ENCODE measurements at regions of chr15 and their contacts with region 1.

Region 1: DNA sequence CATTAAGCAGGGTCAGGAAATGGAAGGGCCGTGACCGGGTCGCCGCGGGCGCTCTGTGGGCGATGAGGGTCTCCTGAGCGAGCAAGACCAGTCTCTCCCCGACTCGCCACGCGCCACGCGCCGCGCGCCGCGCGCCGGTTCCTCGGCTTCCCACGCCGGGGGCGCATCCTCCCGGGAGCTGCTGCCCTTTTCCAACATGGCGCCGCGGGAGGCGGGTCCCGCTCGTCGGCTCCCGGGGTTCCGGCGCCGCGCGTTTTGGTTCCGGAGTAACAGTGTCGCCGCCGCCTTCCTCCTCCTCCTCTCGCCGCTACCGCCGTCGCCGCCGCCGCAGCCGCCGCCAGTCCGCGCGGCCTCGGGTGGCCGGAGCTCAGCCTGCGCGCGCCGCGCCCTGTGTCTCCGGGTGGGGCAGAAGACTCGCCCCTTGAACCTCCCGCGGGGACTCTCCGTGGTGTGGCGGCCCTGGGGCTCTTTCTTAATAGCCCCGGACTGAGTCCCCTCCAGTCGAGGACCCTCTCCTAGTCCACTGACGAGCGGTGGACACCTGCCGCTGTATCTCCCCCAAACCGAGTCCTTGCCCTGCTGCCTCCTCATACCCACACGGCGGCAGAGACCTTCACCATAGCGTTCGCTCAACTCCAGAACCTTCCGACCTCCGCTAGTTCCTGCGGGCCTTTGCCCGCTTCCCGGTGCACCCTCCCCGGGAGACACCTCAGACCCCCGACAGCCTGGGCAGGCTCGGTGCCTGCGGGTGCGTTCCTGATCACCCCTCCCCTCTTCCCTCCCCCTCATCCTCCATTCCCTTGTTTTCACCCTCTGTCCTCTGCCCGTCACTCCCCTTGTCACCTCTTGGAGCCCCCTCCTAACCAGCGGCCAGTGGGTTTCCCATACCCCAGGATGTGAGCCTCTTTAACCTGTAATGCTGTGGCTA is at the start of gene MAP2K5:
- H3K4me3 Mint-ChIP-seq: peak within 1 kb of the TSS; percentile 93
- H3K27ac Mint-ChIP-seq: peak within 1 kb of the TSS; percentile 93
- H3K4me1 Mint-ChIP-seq: peaks cover 25% of the 10 kb centered on the region
- H3K27me3 Mint-ChIP-seq: peaks cover 2% of the 10 kb centered on the region

Region 2: GRCh38 chr15:67456677-67457529 is 85.8 kb before region 1 on chr15:
- intact Hi-C with region 1: loop called (anchors 5 kb)
- H3K4me3 Mint-ChIP-seq: no peak overlapping the region
- H3K27ac Mint-ChIP-seq: no peak overlapping the region
- H3K4me1 Mint-ChIP-seq: no peaks in the 10 kb centered on the region
- H3K27me3 Mint-ChIP-seq: peaks cover 3% of the 10 kb centered on the region

Region 3: GRCh38 chr15:67481680-67482079 is 61.0 kb before region 1 on chr15:
- intact Hi-C with region 1: no loop called
- H3K4me3 Mint-ChIP-seq: no peak overlapping the region
- H3K27ac Mint-ChIP-seq: no peak overlapping the region
- H3K4me1 Mint-ChIP-seq: peaks cover 7% of the 10 kb centered on the region
- H3K27me3 Mint-ChIP-seq: no peaks in the 10 kb centered on the region

Region 4: GRCh38 chr15:67510597-67511225 is 32.0 kb before region 1 on chr15:
- intact Hi-C with region 1: loop called (anchors 5 kb)
- H3K4me3 Mint-ChIP-seq: no peak overlapping the region
- H3K27ac Mint-ChIP-seq: no peak overlapping the region
- H3K4me1 Mint-ChIP-seq: peaks cover 24% of the 10 kb centered on the region
- H3K27me3 Mint-ChIP-seq: no peaks in the 10 kb centered on the region

Region 5: DNA sequence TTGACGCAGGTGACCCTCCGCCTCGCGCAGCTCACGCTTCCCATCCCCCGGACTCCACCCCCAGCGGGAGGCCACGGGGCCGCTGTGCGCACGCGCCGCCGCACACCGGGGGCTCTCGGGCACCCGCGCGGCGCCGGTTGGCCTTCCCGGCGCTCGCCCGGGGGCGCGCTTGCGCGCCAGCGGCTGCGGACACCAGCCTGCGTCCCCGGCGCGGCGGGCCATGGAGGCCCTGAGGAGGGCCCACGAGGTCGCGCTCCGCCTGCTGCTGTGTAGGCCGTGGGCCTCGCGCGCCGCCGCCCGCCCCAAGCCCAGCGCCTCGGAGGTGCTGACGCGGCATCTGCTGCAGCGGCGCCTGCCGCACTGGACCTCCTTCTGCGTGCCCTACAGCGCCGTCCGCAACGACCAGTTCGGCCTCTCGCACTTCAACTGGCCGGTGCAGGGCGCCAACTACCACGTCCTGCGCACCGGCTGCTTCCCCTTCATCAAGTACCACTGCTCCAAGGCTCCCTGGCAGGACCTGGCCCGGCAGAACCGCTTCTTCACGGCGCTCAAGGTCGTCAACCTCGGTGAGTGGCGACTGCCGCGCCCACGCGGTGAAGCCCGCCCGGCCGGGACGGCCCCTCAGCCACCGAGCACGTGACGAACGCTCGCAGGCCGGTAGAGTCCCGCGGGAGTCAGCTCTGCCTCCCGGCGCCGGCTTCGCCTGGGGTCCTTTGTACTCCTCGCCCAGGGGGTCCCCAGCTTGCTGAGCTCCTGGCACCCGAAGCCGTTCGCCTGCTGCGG is 21.5 kb before region 1 on chr15 and contains the start of gene C15orf61:
- intact Hi-C with region 1: loop called (anchors 2 kb)
- H3K4me3 Mint-ChIP-seq: peak within 1 kb of the TSS; percentile 86
- H3K27ac Mint-ChIP-seq: peak within 1 kb of the TSS; percentile 99
- H3K4me1 Mint-ChIP-seq: peaks cover 31% of the 10 kb centered on the region
- H3K27me3 Mint-ChIP-seq: no peaks in the 10 kb centered on the region